PC-9 (cell line): ENCODE measurements at regions of chr4 and their contacts with region 1.

Region 1: DNA sequence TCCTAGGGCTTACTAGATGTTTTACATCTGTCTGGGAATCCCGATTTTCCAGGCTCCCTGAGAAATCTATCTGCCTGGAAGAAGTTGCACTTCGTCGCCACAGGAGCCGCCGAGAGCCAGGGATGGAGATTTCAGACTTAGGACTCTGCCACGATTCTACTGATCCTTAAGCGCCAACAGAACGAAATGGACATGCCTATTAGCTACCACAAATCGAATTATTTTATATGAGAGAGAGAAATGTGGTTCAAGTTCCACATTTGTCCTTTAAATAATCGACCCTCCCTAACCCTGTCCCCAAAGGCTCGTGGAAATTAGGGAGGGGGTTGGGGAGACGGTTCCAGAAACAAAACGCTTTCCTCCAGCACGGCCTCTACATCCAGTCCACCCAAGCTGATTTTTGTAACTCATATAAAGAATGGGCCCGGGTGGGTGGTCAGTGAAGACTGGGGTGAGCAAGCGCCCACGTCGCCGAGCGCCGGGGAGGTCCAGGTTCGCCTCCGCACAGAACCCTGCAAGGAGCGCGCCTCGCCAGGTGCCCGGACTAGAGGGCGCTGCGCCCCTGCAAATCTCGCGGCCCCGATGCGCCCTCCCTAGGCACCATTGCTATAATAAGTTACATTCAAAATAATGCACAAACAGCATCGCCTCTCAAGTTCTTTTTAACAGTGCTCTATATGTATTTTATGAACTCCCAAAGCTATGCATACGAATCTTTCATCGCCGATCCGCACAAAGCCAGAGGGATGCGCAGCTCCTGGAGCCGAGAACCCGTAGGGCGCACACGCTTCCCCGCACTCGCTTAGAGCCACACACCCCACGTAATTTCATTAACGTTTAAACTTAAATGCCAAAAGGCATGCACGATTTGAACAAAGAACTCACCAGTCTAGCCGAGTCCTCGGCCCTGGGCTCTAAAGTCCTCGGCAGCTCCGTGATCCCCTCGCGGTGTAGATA is 2.1 kb upstream of the FAT1 start:
- DNase-seq: peak; percentile 45 to 79
- H3K4me3 ChIP-seq: peak overlapping the region; percentile 98
- H3K27ac ChIP-seq: peak overlapping the region; percentile 57
- H3K4me1 ChIP-seq: peaks cover 40% of the 10 kb centered on the region
- H3K27me3 ChIP-seq: no peaks in the 10 kb centered on the region
- CTCF ChIP-seq: peak; percentile 77

Region 2: DNA sequence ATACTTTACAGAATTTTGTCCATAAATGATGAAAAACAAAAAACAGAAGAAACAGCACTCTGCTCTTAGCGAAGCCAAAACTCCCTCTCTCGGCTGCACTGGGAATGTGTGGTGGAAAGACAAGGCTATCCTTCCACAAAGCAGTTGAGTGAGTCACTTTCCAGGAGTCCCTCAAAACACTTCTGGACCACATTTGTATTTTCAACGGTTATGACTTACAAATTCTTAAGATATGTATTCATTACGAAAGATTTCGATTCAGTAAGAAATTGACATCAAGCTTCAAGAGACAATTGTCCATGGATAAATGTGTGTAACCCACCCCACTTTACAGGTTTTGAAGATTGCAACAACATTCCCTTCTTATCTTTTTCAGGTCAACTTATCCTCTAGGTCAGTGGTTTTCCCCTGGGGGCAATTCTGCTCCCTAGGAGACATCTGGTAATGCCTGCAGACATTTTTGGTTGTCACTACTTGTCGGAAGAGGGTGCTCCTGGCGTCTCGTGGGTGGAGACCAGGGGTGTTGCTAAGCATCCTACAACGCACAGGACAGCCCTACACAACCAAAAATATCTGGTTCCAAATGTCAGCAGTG is 103.7 kb before region 1 on chr4:
- CTCF ChIA-PET with region 1: no interaction called
- POLR2A ChIA-PET with region 1: no interaction called
- intact Hi-C with region 1: loop called (anchors 1 kb)
- DNase-seq: peak; percentile 64 to 71
- H3K4me3 ChIP-seq: no peak overlapping the region
- H3K27ac ChIP-seq: no peak overlapping the region
- H3K4me1 ChIP-seq: no peaks in the 10 kb centered on the region
- H3K27me3 ChIP-seq: no peaks in the 10 kb centered on the region
- CTCF ChIP-seq: no peak

Region 3: DNA sequence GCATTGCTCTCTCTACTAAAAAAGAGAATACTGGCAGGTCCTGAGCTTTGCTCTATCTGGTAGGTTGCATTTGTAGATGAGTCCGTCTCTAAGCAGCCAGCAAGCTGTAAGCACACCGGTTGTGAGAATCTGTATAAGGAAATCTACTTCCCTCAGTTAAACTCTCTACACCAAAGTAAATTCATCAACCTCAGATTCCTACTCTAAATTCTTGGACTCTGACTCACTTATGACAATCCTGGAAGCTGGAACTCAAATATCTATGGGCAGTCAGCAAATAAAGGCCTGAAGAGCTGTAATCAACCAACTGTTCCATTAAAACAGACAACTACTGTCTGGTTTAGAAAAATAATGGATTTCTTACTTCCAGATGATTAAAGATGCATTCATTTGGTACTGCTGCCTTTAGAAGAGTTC is 40.0 kb before region 1 on chr4:
- CTCF ChIA-PET with region 1: no interaction called
- POLR2A ChIA-PET with region 1: no interaction called
- intact Hi-C with region 1: loop called (anchors 2 kb)
- DNase-seq: peak; percentile 32 to 83
- H3K4me3 ChIP-seq: no peak overlapping the region
- H3K27ac ChIP-seq: peak overlapping the region; percentile 38; the same call in 1 of the 2 replicates
- H3K4me1 ChIP-seq: peaks cover 15% of the 10 kb centered on the region
- H3K27me3 ChIP-seq: no peaks in the 10 kb centered on the region
- CTCF ChIP-seq: no peak

Region 4: DNA sequence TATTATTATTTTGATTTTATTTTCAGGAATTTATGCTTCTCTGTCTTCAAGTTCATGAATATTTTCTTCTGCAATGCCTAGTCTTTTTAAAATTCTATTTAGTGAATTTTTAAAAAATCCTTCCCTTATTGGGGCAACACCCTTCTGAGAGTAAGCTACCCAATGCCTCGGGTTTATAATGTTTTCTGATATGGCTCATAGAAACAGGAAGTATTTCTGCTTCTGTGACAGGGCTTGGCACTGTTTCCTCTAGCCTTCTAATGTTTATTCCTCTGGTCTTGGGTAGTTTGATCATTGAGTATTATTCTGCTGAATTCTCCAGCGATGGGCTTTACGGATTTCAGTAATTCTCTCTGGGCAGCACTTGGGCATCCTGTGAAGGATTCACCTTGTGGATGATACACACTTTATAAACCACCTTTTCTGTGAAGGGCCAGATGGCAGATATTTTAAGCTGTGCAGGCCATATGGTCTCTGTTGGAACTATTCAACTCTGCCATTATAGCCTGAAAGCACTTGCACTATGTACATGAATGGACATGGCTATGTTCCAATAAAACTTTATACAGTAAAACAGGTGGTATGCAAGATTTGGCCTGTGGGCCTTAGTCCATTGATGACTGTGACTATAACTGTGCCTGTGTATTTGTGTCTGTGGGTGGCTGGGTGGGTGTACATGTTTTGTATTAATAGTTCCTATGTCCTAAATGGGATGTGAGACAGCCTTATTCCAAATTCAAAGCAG is 93.8 kb after region 1 on chr4:
- CTCF ChIA-PET with region 1: no interaction called
- POLR2A ChIA-PET with region 1: no interaction called
- intact Hi-C with region 1: no loop called
- DNase-seq: no peak
- H3K4me3 ChIP-seq: no peak overlapping the region
- H3K27ac ChIP-seq: no peak overlapping the region
- H3K4me1 ChIP-seq: no peaks in the 10 kb centered on the region
- H3K27me3 ChIP-seq: no peaks in the 10 kb centered on the region
- CTCF ChIP-seq: no peak

Region 5: GRCh38 chr4:186936496-186937375 is 211.0 kb after region 1 on chr4:
- CTCF ChIA-PET with region 1: no interaction called
- POLR2A ChIA-PET with region 1: no interaction called
- intact Hi-C with region 1: loop called (anchors 1 kb)
- DNase-seq: peak; percentile 25 to 88
- H3K4me3 ChIP-seq: peak overlapping the region; percentile 43; the same call in 1 of the 2 replicates
- H3K27ac ChIP-seq: peak overlapping the region; percentile 78
- H3K4me1 ChIP-seq: peaks cover 17% of the 10 kb centered on the region
- H3K27me3 ChIP-seq: no peaks in the 10 kb centered on the region
- CTCF ChIP-seq: peak; percentile 41; the same call in 1 of the 2 replicates

Region 6: GRCh38 chr4:187172340-187172761 is 446.6 kb after region 1 on chr4:
- CTCF ChIA-PET with region 1: no interaction called
- POLR2A ChIA-PET with region 1: no interaction called
- intact Hi-C with region 1: loop called (anchors 5 kb)
- DNase-seq: peak; percentile 43 to 58
- H3K4me3 ChIP-seq: no peak overlapping the region
- H3K27ac ChIP-seq: no peak overlapping the region
- H3K4me1 ChIP-seq: no peaks in the 10 kb centered on the region
- H3K27me3 ChIP-seq: no peaks in the 10 kb centered on the region
- CTCF ChIP-seq: no peak

Region 7: DNA sequence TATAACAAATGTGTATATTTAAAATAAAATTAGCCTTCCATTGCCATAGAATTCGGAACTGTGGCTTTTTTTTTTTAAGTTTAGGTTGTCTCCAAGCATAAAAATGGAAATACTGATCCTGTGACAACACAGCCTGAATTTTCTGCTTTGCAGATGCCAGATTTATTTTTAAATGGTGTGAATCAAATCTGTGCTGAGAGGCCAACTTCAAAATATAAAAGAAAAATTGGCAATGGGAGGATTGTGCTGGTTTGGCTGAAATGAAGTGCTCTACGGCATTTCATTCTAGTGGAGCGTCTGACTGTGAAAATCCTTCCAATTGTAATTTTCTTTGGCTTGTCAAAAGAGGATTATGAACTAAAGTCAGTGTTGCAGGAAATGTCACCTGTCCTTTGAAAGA is 689.5 kb after region 1 on chr4:
- CTCF ChIA-PET with region 1: no interaction called
- POLR2A ChIA-PET with region 1: no interaction called
- intact Hi-C with region 1: loop called (anchors 5 kb)
- DNase-seq: no peak
- H3K4me3 ChIP-seq: no peak overlapping the region
- H3K27ac ChIP-seq: no peak overlapping the region
- H3K4me1 ChIP-seq: no peaks in the 10 kb centered on the region
- H3K27me3 ChIP-seq: no peaks in the 10 kb centered on the region
- CTCF ChIP-seq: no peak